Transverse colon (tissue), 4 donors: ENCODE measurements at regions of chr12 and their contacts with region 1.

Region 1: DNA sequence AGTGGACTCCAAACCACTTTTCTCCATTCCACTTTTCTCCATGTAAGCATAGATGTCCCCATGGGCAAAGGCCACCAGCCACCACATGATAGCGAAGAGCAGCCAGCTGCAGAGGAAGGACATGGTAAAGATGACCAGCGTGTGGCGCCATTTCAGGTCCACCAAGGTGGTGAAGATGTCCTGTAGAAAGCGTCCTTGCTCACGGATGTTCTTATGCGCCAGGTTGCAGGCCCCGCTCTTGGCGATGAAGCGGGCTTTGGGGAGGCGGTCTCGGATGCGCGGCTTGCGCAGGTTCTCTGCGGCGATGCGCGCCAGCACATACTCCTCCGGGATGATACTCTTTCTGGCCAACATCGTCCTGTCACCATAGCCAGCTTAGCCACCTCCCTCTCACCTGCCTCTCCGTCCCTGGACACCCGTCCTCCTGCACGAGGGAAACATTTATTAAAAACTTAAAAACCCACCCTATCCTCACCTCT is 1.2 kb downstream of the KCNJ8 start:
- DNase-seq: peak; percentile 34
- H3K4me3 ChIP-seq: peak overlapping the region in 3 of 4 donors; percentile 38 to 51 (median 43)
- H3K27ac ChIP-seq: peak overlapping the region; percentile 76 to 89 (median 84)
- H3K4me1 ChIP-seq: peaks cover 0 to 15% (median 5%) of the 10 kb centered on the region in 4 donors
- H3K27me3 ChIP-seq: peaks cover 12% of the 10 kb centered on the region
- CTCF ChIP-seq: peak in 4 of 5 experiments; percentile 8 to 26 (median 12)
- EP300 ChIP-seq: no peak
- POLR2A ChIP-seq: no peak

Region 2: GRCh38 chr12:21710948-21711775 is 62.1 kb before region 1 on chr12:
- in situ Hi-C with region 1: no loop called
- intact Hi-C with region 1: loop called (anchors 10 kb)
- DNase-seq: no peak
- H3K4me3 ChIP-seq: no peak overlapping the region
- H3K27ac ChIP-seq: peak overlapping the region in 3 of 4 donors; percentile 3 to 30 (median 26)
- H3K4me1 ChIP-seq: peaks cover 3 to 21% (median 7%) of the 10 kb centered on the region in 4 donors
- H3K27me3 ChIP-seq: no peaks in the 10 kb centered on the region
- CTCF ChIP-seq: no peak
- EP300 ChIP-seq: no peak
- POLR2A ChIP-seq: no peak

Region 3: GRCh38 chr12:21891751-21892217 is 118.5 kb after region 1 on chr12:
- in situ Hi-C with region 1: no loop called
- intact Hi-C with region 1: loop called (anchors 10 kb)
- DNase-seq: peak; percentile 38
- H3K4me3 ChIP-seq: no peak overlapping the region
- H3K27ac ChIP-seq: peak overlapping the region; percentile 35 to 83 (median 70)
- H3K4me1 ChIP-seq: peaks cover 0 to 8% (median 3%) of the 10 kb centered on the region in 4 donors
- H3K27me3 ChIP-seq: no peaks in the 10 kb centered on the region
- CTCF ChIP-seq: no peak
- EP300 ChIP-seq: no peak
- POLR2A ChIP-seq: no peak

Region 4: GRCh38 chr12:21940549-21941505 is 167.5 kb after region 1 on chr12 and contains the start of gene ABCC9:
- in situ Hi-C with region 1: no loop called
- intact Hi-C with region 1: loop called (anchors 2 kb)
- DNase-seq: peak; percentile 13
- H3K4me3 ChIP-seq: peak within 1 kb of the TSS; percentile 0 to 48 (median 27)
- H3K27ac ChIP-seq: peak within 1 kb of the TSS; percentile 62 to 83 (median 73)
- H3K4me1 ChIP-seq: peaks cover 0 to 13% (median 2%) of the 10 kb centered on the region in 4 donors
- H3K27me3 ChIP-seq: peaks cover 48% of the 10 kb centered on the region
- CTCF ChIP-seq: no peak
- EP300 ChIP-seq: no peak
- POLR2A ChIP-seq: no peak
- total RNA-seq, gene ABCC9: 5.2 to 10.2 (median 8.0) TPM